ENCODE measurements at regions of chr15 and their contacts with region 1.

Region 1: GRCh38 chr15:91302588-91303439 is 202.8 kb downstream of the SV2B start:
- DNase-seq: peak in 11 of 35 experiments; percentile 13 to 75 (median 26)
- ATAC-seq: peak; percentile 37 to 54 (median 50)
- H3K4me3 ChIP-seq: no peak overlapping the region
- H3K4me3 Mint-ChIP-seq: peak overlapping the region in 1 of 3 donors; percentile 27
- H3K27ac ChIP-seq: no peak overlapping the region
- H3K27ac Mint-ChIP-seq: no peak overlapping the region
- H3K4me1 ChIP-seq: peaks cover 19 to 24% of the 10 kb centered on the region in 2 experiments
- H3K4me1 Mint-ChIP-seq: peaks cover 35 to 51% (median 49%) of the 10 kb centered on the region in 3 donors
- H3K27me3 ChIP-seq: peaks cover 0 to 7% of the 10 kb centered on the region in 2 experiments
- H3K27me3 Mint-ChIP-seq: peaks cover 11 to 15% of the 10 kb centered on the region in 2 donors

Region 2: DNA sequence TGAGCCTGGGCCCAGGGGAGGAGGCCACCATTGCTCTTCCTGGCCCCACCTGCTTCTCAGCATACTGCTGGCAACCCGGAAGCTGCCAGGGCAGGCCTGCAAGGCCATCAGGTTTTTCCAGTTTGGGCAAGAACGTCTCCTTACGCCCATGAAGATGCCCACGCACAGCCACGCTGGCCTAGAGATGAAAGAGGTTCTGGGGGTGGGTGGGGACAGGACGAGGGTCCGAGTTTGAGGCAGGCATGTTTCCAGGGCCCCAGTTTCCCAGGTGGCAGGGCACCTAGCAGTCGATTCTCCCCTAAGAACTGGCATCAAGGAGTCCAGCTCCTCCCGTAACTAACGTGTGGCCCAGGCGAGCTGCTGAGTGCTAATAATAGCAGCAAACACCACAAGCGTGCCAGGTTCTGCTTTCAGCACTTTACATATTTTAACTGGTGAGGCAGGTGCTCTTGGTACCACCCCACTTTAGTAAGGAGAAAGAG is 1255.9 kb before region 1 on chr15:
- CTCF ChIA-PET with region 1: no interaction called
- POLR2A ChIA-PET with region 1: no interaction called
- DNase-seq: no peak
- ATAC-seq: no peak
- H3K4me3 ChIP-seq: no peak overlapping the region
- H3K4me3 Mint-ChIP-seq: no peak overlapping the region
- H3K27ac ChIP-seq: no peak overlapping the region
- H3K27ac Mint-ChIP-seq: no peak overlapping the region
- H3K4me1 ChIP-seq: peaks cover 0 to 8% of the 10 kb centered on the region in 2 experiments
- H3K4me1 Mint-ChIP-seq: peaks cover 9 to 33% (median 10%) of the 10 kb centered on the region in 3 donors
- H3K27me3 ChIP-seq: no peaks in the 10 kb centered on the region
- H3K27me3 Mint-ChIP-seq: no peaks in the 10 kb centered on the region

Region 3: DNA sequence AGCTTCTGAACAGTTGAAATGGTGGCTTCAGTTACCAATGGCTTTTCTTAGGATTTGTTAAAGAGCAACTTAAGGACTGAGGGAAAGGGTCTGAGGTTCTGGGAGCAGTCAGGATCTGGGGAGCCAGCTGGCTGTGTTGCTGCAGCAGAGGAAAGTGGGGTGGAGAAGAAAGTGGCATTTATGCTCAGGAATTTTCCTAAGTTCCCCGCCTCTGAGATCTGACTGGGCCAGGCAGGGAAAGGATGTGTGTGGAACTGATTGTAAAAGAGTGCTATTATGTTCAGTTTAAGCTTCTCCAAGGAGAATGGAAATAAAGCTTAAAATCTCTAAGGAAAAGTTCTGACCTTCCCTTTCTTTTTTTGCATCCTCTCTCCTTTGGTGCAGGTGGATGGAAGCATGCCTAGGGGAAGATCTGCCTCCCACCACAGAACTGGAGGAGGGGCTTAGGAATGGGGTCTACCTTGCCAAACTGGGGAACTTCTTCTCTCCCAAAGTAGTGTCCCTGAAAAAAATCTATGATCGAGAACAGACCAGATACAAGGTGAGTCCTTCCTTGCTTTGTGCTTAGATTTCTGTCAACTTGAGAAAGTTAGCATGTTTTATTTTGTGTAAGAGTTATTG is 877.0 kb before region 1 on chr15:
- CTCF ChIA-PET with region 1: no interaction called
- POLR2A ChIA-PET with region 1: no interaction called
- DNase-seq: no peak
- ATAC-seq: no peak
- H3K4me3 ChIP-seq: no peak overlapping the region
- H3K4me3 Mint-ChIP-seq: no peak overlapping the region
- H3K27ac ChIP-seq: no peak overlapping the region
- H3K27ac Mint-ChIP-seq: peak overlapping the region in 1 of 2 donors; percentile 64
- H3K4me1 ChIP-seq: peaks cover 5 to 21% of the 10 kb centered on the region in 2 experiments
- H3K4me1 Mint-ChIP-seq: peaks cover 41 to 45% (median 44%) of the 10 kb centered on the region in 3 donors
- H3K27me3 ChIP-seq: no peaks in the 10 kb centered on the region
- H3K27me3 Mint-ChIP-seq: no peaks in the 10 kb centered on the region

Region 4: GRCh38 chr15:91535856-91536500 is 233.2 kb after region 1 on chr15:
- CTCF ChIA-PET with region 1: interaction called in 1 of 2 experiments, 11 read pairs
- POLR2A ChIA-PET with region 1: no interaction called
- DNase-seq: no peak
- ATAC-seq: no peak
- H3K4me3 ChIP-seq: no peak overlapping the region
- H3K4me3 Mint-ChIP-seq: no peak overlapping the region
- H3K27ac ChIP-seq: no peak overlapping the region
- H3K27ac Mint-ChIP-seq: no peak overlapping the region
- H3K4me1 ChIP-seq: no peaks in the 10 kb centered on the region
- H3K4me1 Mint-ChIP-seq: peaks cover 0 to 2% (median 0%) of the 10 kb centered on the region in 3 donors
- H3K27me3 ChIP-seq: peaks cover 0 to 3% of the 10 kb centered on the region in 2 experiments
- H3K27me3 Mint-ChIP-seq: no peaks in the 10 kb centered on the region

Region 5: DNA sequence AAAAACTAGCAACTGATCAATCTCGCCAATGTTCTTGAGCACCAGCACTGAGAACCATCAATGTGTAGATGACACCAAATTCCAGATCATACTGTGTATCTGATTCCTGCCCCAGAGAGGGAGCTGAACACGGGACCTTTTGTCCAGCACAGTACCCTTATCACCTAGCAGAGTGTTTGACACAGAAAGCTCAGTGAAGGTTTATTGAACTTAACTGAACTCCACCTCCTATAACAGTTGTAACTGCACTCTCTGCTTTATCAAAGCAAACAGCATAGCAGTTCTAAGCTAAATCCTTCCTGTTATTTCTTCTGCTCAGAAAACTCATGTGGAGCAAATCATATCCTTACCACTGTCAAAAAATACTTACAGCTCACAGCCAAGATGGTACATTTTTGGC is 367.3 kb after region 1 on chr15:
- CTCF ChIA-PET with region 1: no interaction called
- POLR2A ChIA-PET with region 1: no interaction called
- DNase-seq: no peak
- ATAC-seq: no peak
- H3K4me3 ChIP-seq: no peak overlapping the region
- H3K4me3 Mint-ChIP-seq: no peak overlapping the region
- H3K27ac ChIP-seq: no peak overlapping the region
- H3K27ac Mint-ChIP-seq: no peak overlapping the region
- H3K4me1 ChIP-seq: no peaks in the 10 kb centered on the region
- H3K4me1 Mint-ChIP-seq: no peaks in the 10 kb centered on the region
- H3K27me3 ChIP-seq: peaks cover 0 to 10% of the 10 kb centered on the region in 2 experiments
- H3K27me3 Mint-ChIP-seq: peaks cover 13% of the 10 kb centered on the region in 2 donors

Region 6: GRCh38 chr15:91942676-91943576 is 640.1 kb after region 1 on chr15:
- CTCF ChIA-PET with region 1: interaction called in 1 of 2 experiments, 19 read pairs
- POLR2A ChIA-PET with region 1: no interaction called
- DNase-seq: peak in 30 of 35 experiments; percentile 6 to 63 (median 38)
- ATAC-seq: peak; percentile 65 to 95 (median 88)
- H3K4me3 ChIP-seq: peak overlapping the region in 1 of 2 donors; percentile 4
- H3K4me3 Mint-ChIP-seq: peak overlapping the region in 2 of 3 donors; percentile 59 to 65
- H3K27ac ChIP-seq: peak overlapping the region; percentile 28
- H3K27ac Mint-ChIP-seq: peak overlapping the region; percentile 74 to 88
- H3K4me1 ChIP-seq: peaks cover 0 to 38% of the 10 kb centered on the region in 2 experiments
- H3K4me1 Mint-ChIP-seq: peaks cover 72 to 85% (median 76%) of the 10 kb centered on the region in 3 donors
- H3K27me3 ChIP-seq: no peaks in the 10 kb centered on the region
- H3K27me3 Mint-ChIP-seq: peaks cover 0 to 4% of the 10 kb centered on the region in 2 donors

Measured in T-cell (primary cell).